ENCODE measurements at regions of chr19 and their contacts with region 1.

Region 1: GRCh38 chr19:55605207-55605636 is 225 bp upstream of the ZNF865 start:
- DNase-seq: peak; percentile 99
- H3K4me3 ChIP-seq: peak overlapping the region; percentile 87
- H3K4me3 Mint-ChIP-seq: peak overlapping the region; percentile 86
- H3K27ac Mint-ChIP-seq: peak overlapping the region; percentile 80
- H3K4me1 ChIP-seq: peaks cover 6% of the 10 kb centered on the region; the same call in 1 of the 2 replicates
- H3K4me1 Mint-ChIP-seq: peaks cover 12% of the 10 kb centered on the region
- H3K27me3 ChIP-seq: no peaks in the 10 kb centered on the region
- H3K27me3 Mint-ChIP-seq: no peaks in the 10 kb centered on the region
- CTCF ChIP-seq: no peak

Region 2: DNA sequence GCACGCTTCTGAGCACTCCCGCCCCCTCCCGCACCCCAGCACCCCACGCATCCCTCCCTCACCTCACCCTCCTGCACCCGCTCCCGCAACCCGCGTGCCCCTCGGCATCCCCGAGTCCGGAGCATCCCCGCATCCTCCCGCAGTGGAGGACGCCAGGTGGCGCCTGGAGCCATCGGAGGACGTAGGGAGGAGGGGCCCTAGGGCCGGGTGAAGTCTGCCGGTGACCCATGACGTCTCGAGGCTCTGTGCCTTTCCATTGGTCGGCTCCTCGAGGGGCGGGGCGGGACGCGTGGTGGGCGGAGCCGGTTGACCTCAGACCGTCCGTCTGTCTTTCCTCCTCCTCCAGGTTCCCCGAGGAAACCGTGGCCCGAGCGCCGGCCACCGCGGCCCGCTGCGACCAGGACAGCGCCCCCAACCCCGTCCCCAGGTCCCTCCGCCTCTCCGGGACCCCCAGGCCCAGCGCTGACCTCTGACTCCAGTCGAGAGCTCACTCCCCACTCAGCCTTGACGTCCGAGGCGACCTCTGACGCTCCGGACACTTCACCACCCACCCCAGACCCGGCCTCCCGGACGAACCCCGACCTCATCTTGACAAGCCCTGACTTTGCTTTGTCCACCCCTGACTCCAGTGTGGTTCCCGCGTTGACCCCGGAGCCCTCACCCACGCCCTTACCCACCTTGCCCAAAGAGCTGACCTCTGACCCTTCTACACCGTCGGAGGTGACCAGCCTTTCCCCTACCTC is 88.2 kb before region 1 on chr19:
- CTCF ChIA-PET with region 1: interaction called, 6 read pairs
- POLR2A ChIA-PET with region 1: interaction called, 22 read pairs
- intact Hi-C with region 1: loop called (anchors 1 kb)
- DNase-seq: peak; percentile 94 to 97
- H3K4me3 ChIP-seq: peak overlapping the region; percentile 31
- H3K4me3 Mint-ChIP-seq: peak overlapping the region; percentile 72
- H3K27ac Mint-ChIP-seq: peak overlapping the region; percentile 77
- H3K4me1 ChIP-seq: peaks cover 8% of the 10 kb centered on the region
- H3K4me1 Mint-ChIP-seq: no peaks in the 10 kb centered on the region
- H3K27me3 ChIP-seq: no peaks in the 10 kb centered on the region
- H3K27me3 Mint-ChIP-seq: peaks cover 5% of the 10 kb centered on the region
- CTCF ChIP-seq: peak; percentile 89 to 98

Region 3: GRCh38 chr19:55549500-55550320 is 55.5 kb before region 1 on chr19:
- CTCF ChIA-PET with region 1: interaction called, 3 read pairs
- POLR2A ChIA-PET with region 1: interaction called, 7 read pairs
- intact Hi-C with region 1: loop called (anchors 1 kb)
- DNase-seq: peak; percentile 80 to 85
- H3K4me3 ChIP-seq: peak overlapping the region; percentile 35
- H3K4me3 Mint-ChIP-seq: peak overlapping the region; percentile 81
- H3K27ac Mint-ChIP-seq: peak overlapping the region; percentile 84
- H3K4me1 ChIP-seq: peaks cover 34% of the 10 kb centered on the region
- H3K4me1 Mint-ChIP-seq: peaks cover 50% of the 10 kb centered on the region
- H3K27me3 ChIP-seq: no peaks in the 10 kb centered on the region
- H3K27me3 Mint-ChIP-seq: no peaks in the 10 kb centered on the region
- CTCF ChIP-seq: peak; percentile 29 to 32

Region 4: DNA sequence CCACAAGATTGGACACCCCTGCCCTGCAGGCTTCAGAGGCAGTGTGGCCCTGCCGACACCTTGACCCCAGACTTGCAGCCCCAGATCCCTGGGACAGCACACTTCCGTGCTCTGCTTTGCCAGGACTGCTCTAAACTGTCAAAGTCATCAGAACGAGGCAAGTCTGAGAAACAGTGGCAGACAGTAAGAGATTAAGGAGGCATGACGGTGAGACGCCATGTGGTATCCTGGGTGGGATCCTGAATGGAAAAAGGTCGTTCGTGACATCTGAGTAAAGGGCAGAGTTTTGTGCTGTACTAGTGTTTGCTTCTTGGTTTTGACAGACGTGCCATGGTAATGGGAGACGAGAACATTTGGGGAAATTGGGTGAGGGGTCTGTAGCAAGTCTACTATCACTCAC is 38.4 kb before region 1 on chr19:
- CTCF ChIA-PET with region 1: interaction called, 10 read pairs
- POLR2A ChIA-PET with region 1: no interaction called
- intact Hi-C with region 1: no loop called
- DNase-seq: no peak
- H3K4me3 ChIP-seq: no peak overlapping the region
- H3K4me3 Mint-ChIP-seq: no peak overlapping the region
- H3K27ac Mint-ChIP-seq: no peak overlapping the region
- H3K4me1 ChIP-seq: 0 out of 2 replicates have a peak, but pooled peaks cover 3% of the 10 kb centered on the region
- H3K4me1 Mint-ChIP-seq: no peaks in the 10 kb centered on the region
- H3K27me3 ChIP-seq: no peaks in the 10 kb centered on the region
- H3K27me3 Mint-ChIP-seq: no peaks in the 10 kb centered on the region
- CTCF ChIP-seq: no peak

Region 5: GRCh38 chr19:55580628-55581144 is 24.5 kb before region 1 on chr19 and contains the start of gene ZNF579:
- CTCF ChIA-PET with region 1: interaction called, 16 read pairs
- POLR2A ChIA-PET with region 1: interaction called, 21 read pairs
- intact Hi-C with region 1: loop called (anchors 1 kb)
- DNase-seq: peak; percentile 93
- H3K4me3 ChIP-seq: peak within 1 kb of the TSS; percentile 68
- H3K4me3 Mint-ChIP-seq: peak within 1 kb of the TSS; percentile 85
- H3K27ac Mint-ChIP-seq: peak within 1 kb of the TSS; percentile 46
- H3K4me1 ChIP-seq: peaks cover 19% of the 10 kb centered on the region
- H3K4me1 Mint-ChIP-seq: peaks cover 27% of the 10 kb centered on the region
- H3K27me3 ChIP-seq: no peaks in the 10 kb centered on the region
- H3K27me3 Mint-ChIP-seq: no peaks in the 10 kb centered on the region
- CTCF ChIP-seq: no peak
- total RNA-seq, gene ZNF579: 26.5 and 30.4 TPM in 2 replicates

Region 6: GRCh38 chr19:55586976-55587668 is 18.1 kb before region 1 on chr19:
- CTCF ChIA-PET with region 1: interaction called, 16 read pairs
- POLR2A ChIA-PET with region 1: interaction called, 21 read pairs
- intact Hi-C with region 1: no loop called
- DNase-seq: peak; percentile 98
- H3K4me3 ChIP-seq: peak overlapping the region; percentile 42
- H3K4me3 Mint-ChIP-seq: peak overlapping the region; percentile 75
- H3K27ac Mint-ChIP-seq: peak overlapping the region; percentile 81
- H3K4me1 ChIP-seq: peaks cover 11% of the 10 kb centered on the region
- H3K4me1 Mint-ChIP-seq: peaks cover 16% of the 10 kb centered on the region
- H3K27me3 ChIP-seq: no peaks in the 10 kb centered on the region
- H3K27me3 Mint-ChIP-seq: no peaks in the 10 kb centered on the region
- CTCF ChIP-seq: no peak

Region 7: GRCh38 chr19:55624109-55625003 is 19.1 kb after region 1 on chr19 and contains the start of gene ZNF784:
- CTCF ChIA-PET with region 1: interaction called, 30 read pairs
- POLR2A ChIA-PET with region 1: interaction called, 17 read pairs
- intact Hi-C with region 1: loop called (anchors 1 kb)
- DNase-seq: peak; percentile 94 to 97
- H3K4me3 ChIP-seq: peak within 1 kb of the TSS; percentile 74
- H3K4me3 Mint-ChIP-seq: peak within 1 kb of the TSS; percentile 73
- H3K27ac Mint-ChIP-seq: peak within 1 kb of the TSS; percentile 85
- H3K4me1 ChIP-seq: no peaks in the 10 kb centered on the region
- H3K4me1 Mint-ChIP-seq: peaks cover 7% of the 10 kb centered on the region
- H3K27me3 ChIP-seq: no peaks in the 10 kb centered on the region
- H3K27me3 Mint-ChIP-seq: no peaks in the 10 kb centered on the region
- CTCF ChIP-seq: no peak
- total RNA-seq, gene ZNF784: 8.5 and 10.2 TPM in 2 replicates